Activated CD4-positive, alpha-beta memory T cell treated with anti-CD3 and anti-CD28 coated beads for 36 hours (primary cell): ENCODE measurements at regions of chr1 and their contacts with region 1.

Region 1: DNA sequence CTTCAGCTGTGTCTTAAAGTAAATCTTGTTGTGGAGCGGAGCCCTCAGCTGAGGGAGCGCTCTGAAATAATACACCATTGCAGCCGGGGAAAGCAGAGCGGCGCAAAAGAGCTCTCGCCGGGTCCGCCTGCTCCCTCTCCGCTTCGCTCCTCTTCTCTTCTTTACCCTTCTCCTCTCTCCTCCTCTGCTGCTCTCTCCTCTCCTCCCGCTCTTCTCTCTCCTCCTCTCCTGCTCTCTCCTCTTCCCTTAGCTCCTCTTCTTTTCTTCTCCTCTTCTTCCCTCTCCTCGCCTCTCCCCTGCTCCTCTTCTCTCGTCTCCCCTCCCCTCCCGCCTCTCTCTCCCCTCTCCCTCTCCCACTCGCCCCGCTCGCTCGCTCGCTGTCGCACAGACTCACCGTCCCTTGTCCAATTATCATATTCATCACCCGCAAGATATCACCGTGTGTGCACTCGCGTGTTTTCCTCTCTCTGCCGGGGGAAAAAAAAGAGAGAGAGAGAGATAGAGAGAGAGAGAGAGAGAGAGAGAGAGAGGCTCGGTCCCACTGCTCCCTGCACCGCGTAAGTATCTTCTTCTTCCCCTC is at the start of gene PROX1:
- DNase-seq: peak; percentile 61
- H3K4me3 Mint-ChIP-seq: peak within 1 kb of the TSS; percentile 80
- H3K27ac Mint-ChIP-seq: no peak within 1 kb of the TSS
- H3K4me1 Mint-ChIP-seq: peaks cover 32% of the 10 kb centered on the region
- H3K27me3 Mint-ChIP-seq: peaks cover 86% of the 10 kb centered on the region
- total RNA-seq, gene PROX1: 0.02 to 0.17 TPM

Region 2: GRCh38 chr1:213689260-213689659 is 298.8 kb before region 1 on chr1:
- CTCF ChIA-PET with region 1: no interaction called
- POLR2A ChIA-PET with region 1: no interaction called
- intact Hi-C with region 1: loop called (anchors 10 kb)
- DNase-seq: no peak
- H3K4me3 Mint-ChIP-seq: no peak overlapping the region
- H3K27ac Mint-ChIP-seq: no peak overlapping the region
- H3K4me1 Mint-ChIP-seq: no peaks in the 10 kb centered on the region
- H3K27me3 Mint-ChIP-seq: no peaks in the 10 kb centered on the region

Region 3: DNA sequence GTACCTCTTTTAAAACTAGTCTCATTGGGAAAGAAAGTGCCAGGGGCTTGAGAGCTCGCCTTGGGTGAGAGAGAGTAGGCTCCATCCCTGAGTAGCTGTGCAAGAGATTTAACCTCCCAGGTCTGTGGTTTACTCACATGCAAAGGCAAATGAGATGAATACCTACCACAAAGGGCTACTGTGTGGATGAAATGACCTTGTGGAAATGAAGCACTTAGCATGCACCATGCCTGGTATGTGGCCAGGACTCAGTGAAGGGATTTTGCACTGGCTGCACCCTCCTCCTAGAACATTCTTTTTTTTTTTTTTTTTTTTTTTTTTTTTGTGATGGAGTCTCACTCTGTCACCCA is 120.1 kb after region 1 on chr1:
- CTCF ChIA-PET with region 1: no interaction called
- POLR2A ChIA-PET with region 1: no interaction called
- intact Hi-C with region 1: no loop called
- DNase-seq: no peak
- H3K4me3 Mint-ChIP-seq: no peak overlapping the region
- H3K27ac Mint-ChIP-seq: no peak overlapping the region
- H3K4me1 Mint-ChIP-seq: no peaks in the 10 kb centered on the region
- H3K27me3 Mint-ChIP-seq: peaks cover 1% of the 10 kb centered on the region